Right lobe of liver (tissue), 6 donors: ENCODE measurements at regions of chr10 and their contacts with region 1.

Region 1: GRCh38 chr10:99551158-99551557 is 18.4 kb downstream of the NKX2-3 start:
- DNase-seq: no peak
- ATAC-seq: no peak
- H3K4me3 ChIP-seq: no peak overlapping the region
- H3K27ac ChIP-seq: no peak overlapping the region
- H3K4me1 ChIP-seq: no peaks in the 10 kb centered on the region
- H3K27me3 ChIP-seq: no peaks in the 10 kb centered on the region
- CTCF ChIP-seq: no peak
- POLR2A ChIP-seq: no peak

Region 2: GRCh38 chr10:99506416-99506815 is 44.7 kb before region 1 on chr10:
- intact Hi-C with region 1: no loop called
- DNase-seq: no peak
- ATAC-seq: no peak
- H3K4me3 ChIP-seq: no peak overlapping the region
- H3K27ac ChIP-seq: no peak overlapping the region
- H3K4me1 ChIP-seq: no peaks in the 10 kb centered on the region
- H3K27me3 ChIP-seq: no peaks in the 10 kb centered on the region
- CTCF ChIP-seq: no peak
- POLR2A ChIP-seq: no peak

Region 3: DNA sequence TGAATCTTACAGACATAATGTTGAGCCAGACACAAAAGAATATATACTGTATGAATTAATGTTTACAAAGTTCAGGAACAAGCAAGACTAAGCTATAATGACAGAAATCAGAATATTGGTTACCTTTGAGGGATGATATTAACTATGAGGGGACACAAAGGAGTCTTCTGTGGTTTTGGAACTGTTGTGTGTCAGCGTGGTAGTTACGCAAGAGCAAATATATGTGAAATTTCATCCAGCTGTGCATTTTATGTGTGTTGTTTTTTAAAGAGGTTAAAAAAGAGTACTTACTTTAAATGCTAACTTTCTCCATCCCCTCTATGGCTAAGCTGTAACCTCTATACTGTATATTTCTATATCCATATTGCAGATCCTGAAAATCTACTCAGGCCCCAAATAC is 54.2 kb after region 1 on chr10:
- intact Hi-C with region 1: loop called in 1 of 2 experiments (anchors 10 kb)
- DNase-seq: no peak
- ATAC-seq: no peak
- H3K4me3 ChIP-seq: no peak overlapping the region
- H3K27ac ChIP-seq: no peak overlapping the region
- H3K4me1 ChIP-seq: no peaks in the 10 kb centered on the region
- H3K27me3 ChIP-seq: no peaks in the 10 kb centered on the region
- CTCF ChIP-seq: no peak
- POLR2A ChIP-seq: no peak

Region 4: DNA sequence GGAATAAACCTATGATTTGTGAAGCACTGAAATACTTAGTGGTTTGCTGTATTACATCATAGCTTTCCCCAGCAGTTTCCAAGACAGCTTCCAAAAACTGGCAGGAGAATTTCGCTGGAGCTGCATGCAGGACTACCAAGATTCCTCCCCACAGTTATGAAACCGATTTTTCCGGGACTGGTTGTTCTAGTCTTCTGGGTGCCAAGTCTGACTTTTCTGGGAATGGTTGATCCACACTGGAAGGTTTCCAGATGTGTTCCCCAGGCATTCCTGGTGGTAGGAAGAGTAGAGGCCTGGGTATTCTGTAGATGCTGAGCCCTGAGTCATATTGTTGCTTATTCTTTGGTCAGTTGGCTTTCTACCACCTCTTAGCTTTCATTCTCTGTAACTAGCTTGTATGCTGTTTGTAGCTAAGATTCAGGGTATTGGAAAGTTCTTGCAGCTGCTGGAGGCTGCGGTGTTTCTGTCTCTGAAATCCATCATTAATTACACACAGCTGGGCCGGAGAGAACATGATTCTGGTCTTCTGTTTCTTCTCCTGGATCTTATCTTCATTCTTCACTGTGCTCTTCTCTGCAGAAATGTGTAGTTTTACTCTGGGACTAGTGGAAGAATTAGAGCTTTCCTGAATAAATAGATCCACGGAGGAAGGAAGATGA is 237.6 kb after region 1 on chr10:
- intact Hi-C with region 1: no loop called
- DNase-seq: peak in 1 of 3 donors; percentile 80
- ATAC-seq: peak; percentile 51 to 81 (median 63)
- H3K4me3 ChIP-seq: peak overlapping the region in 2 of 3 donors; percentile 25 to 70
- H3K27ac ChIP-seq: peak overlapping the region; percentile 28 to 82 (median 70)
- H3K4me1 ChIP-seq: peaks cover 0 to 19% (median 4%) of the 10 kb centered on the region in 4 donors
- H3K27me3 ChIP-seq: no peaks in the 10 kb centered on the region
- CTCF ChIP-seq: no peak
- POLR2A ChIP-seq: peak; percentile 18